ENCODE measurements at regions of chr2 and their contacts with region 1.

Region 1: DNA sequence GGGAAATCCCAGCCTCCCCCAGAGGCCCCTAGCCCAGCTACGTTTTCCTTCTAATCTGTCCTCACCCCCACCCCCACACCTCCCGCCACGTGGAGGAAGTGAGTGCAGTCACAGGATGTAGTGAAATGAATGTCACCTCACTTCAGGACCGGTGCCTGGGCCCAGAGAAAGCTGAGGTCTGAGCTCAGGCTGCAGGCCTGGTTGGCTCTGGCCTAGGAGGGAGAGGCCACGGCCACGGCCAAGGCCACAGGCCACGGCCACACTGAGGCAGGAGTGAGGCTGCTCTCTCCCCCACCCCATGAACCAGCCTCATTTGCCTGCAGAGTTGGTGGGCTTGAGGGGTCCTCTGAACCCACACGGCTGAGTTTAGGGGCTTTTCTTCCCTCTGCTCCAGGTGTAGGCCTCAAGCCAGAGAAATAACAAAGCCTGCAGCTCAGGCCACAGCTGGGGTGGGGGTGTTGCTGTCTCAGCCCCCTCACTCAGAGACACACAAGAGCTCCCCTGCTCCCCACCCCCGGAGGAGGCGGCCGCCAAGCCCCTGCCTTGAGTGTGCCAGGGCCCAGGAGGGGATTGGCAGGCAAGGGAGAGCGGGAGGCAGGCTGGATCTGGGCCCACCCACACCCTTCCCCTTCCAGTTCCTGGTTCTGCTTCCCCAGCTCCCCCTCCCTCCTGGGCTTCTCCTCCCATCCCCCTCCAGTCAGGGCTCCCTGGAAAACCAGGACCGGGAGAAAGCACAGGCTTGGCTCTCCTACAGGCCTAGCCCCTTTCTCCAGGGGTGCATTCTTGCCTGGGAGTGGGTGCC is 27.0 kb downstream of the DNMT3A start:
- DNase-seq: peak in 8 of 9 donors; percentile 51 to 90 (median 64)
- ATAC-seq: peak; percentile 79
- H3K4me3 ChIP-seq: peak overlapping the region; percentile 51
- H3K4me3 Mint-ChIP-seq: peak overlapping the region; percentile 61 to 83 (median 81)
- H3K27ac ChIP-seq: peak overlapping the region; percentile 79
- H3K27ac Mint-ChIP-seq: peak overlapping the region; percentile 79 to 97 (median 92)
- H3K4me1 ChIP-seq: peaks cover 34 to 60% of the 10 kb centered on the region in 2 donors
- H3K4me1 Mint-ChIP-seq: peaks cover 36 to 84% (median 70%) of the 10 kb centered on the region in 7 donors
- H3K27me3 ChIP-seq: no peaks in the 10 kb centered on the region
- H3K27me3 Mint-ChIP-seq: no peaks in the 10 kb centered on the region

Region 2: DNA sequence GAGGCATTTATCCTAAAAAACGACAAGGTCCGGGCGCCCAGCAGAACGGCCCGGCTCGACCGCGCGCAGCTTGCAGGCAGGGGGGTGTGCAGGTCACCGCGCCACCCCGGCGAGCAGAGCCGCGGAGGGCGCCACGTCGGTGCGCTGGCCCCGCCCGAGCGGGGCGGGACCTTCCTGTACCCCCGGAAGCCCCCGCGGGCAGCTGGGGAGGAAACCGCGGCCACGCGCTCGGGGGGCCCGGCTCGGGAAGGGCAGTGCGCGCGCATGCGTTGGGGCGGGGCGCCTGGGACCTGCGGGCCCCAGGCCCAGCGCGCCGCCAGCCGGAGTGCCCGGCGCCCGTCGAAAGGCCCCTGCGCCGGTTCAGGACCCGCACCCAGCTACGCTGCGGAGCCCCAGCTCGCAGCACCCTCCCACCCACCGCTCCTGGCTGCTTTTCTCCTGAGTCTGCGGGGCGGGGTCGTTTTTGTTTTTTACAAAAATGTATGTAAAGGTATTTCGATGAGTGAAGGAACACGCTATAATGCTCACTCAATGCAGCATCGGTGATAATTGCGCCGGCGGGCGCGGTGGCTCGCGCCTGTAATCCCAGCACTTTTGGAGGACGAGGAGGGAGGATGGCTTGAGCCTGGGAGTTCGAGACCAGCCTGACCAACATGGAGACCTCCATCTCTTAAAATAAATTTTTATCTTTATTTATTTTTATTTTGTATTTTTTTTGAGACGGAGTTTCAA is 98.6 kb before region 1 on chr2:
- CTCF ChIA-PET with region 1: no interaction called
- POLR2A ChIA-PET with region 1: no interaction called
- intact Hi-C with region 1: loop called in 1 of 2 experiments (anchors 1 kb)
- DNase-seq: peak; percentile 73 to 88 (median 85)
- ATAC-seq: peak; percentile 96
- H3K4me3 ChIP-seq: peak overlapping the region; percentile 61
- H3K4me3 Mint-ChIP-seq: peak overlapping the region; percentile 71 to 88 (median 78)
- H3K27ac ChIP-seq: peak overlapping the region; percentile 74
- H3K27ac Mint-ChIP-seq: peak overlapping the region; percentile 64 to 94 (median 89)
- H3K4me1 ChIP-seq: peaks cover 0 to 6% of the 10 kb centered on the region in 2 donors
- H3K4me1 Mint-ChIP-seq: peaks cover 9 to 33% (median 18%) of the 10 kb centered on the region in 7 donors
- H3K27me3 ChIP-seq: no peaks in the 10 kb centered on the region
- H3K27me3 Mint-ChIP-seq: no peaks in the 10 kb centered on the region

Region 3: GRCh38 chr2:25294573-25295462 is 19.9 kb before region 1 on chr2:
- CTCF ChIA-PET with region 1: interaction called, 22 read pairs
- POLR2A ChIA-PET with region 1: interaction called, 24 read pairs
- intact Hi-C with region 1: loop called in 1 of 2 experiments (anchors 2 kb)
- DNase-seq: peak; percentile 51 to 79 (median 73)
- ATAC-seq: peak; percentile 89
- H3K4me3 ChIP-seq: peak overlapping the region; percentile 46
- H3K4me3 Mint-ChIP-seq: peak overlapping the region; percentile 72 to 85 (median 82)
- H3K27ac ChIP-seq: peak overlapping the region; percentile 81
- H3K27ac Mint-ChIP-seq: peak overlapping the region; percentile 90 to 99 (median 97)
- H3K4me1 ChIP-seq: peaks cover 31 to 61% of the 10 kb centered on the region in 2 donors
- H3K4me1 Mint-ChIP-seq: peaks cover 39 to 75% (median 55%) of the 10 kb centered on the region in 7 donors
- H3K27me3 ChIP-seq: no peaks in the 10 kb centered on the region
- H3K27me3 Mint-ChIP-seq: no peaks in the 10 kb centered on the region

Region 4: DNA sequence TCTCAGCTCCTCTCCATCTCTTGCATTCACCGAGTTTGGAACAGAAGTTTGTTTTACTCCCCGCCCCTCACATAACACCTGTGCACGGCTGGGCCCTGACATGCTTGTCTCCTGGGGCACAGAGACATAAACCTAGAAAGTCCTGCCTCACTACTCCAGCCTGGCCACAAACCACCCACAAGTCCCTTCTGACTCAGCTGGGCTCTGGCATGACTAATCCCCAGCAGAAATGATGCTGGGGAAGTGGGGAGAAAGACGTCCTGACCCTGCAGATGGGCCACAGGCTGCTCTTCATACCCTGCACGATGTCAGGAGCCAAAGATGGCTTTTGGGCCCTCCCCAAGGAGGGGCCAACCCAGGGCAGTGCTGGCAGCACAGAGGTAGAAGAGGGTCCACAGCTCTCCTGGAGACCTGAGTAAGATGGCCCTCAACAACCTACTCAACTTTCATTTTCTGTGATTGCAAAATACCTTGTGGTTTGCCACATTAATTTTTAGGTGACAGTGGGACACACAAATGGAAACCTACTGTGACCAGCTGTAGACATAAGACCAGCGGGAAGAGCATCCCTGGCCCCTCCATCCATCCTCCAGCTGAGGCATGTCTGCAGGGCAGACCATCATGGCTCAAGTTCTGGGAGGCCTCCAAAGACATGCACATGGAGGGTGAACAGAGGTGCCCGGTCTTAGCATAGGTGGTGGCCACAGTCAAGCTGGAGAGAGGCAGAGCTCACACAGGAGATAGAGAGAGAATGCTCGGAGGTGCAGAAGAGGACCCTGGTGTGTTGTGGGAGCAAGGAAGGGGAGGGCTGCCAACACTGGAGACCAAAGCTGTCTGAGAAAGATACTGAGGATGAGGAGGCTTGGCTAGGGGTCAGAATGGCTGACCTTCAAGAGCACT is 13.0 kb before region 1 on chr2:
- CTCF ChIA-PET with region 1: interaction called, 8 read pairs
- POLR2A ChIA-PET with region 1: interaction called, 3 read pairs
- intact Hi-C with region 1: loop called in 1 of 2 experiments (anchors 1 kb)
- DNase-seq: peak in 2 of 9 donors; percentile 8 to 77
- ATAC-seq: peak; percentile 84
- H3K4me3 ChIP-seq: peak overlapping the region; percentile 3
- H3K4me3 Mint-ChIP-seq: peak overlapping the region in 3 of 10 donors; percentile 7 to 57 (median 44)
- H3K27ac ChIP-seq: peak overlapping the region; percentile 46
- H3K27ac Mint-ChIP-seq: peak overlapping the region; percentile 51 to 88 (median 74)
- H3K4me1 ChIP-seq: peaks cover 20 to 23% of the 10 kb centered on the region in 2 donors
- H3K4me1 Mint-ChIP-seq: peaks cover 29 to 61% (median 52%) of the 10 kb centered on the region in 7 donors
- H3K27me3 ChIP-seq: no peaks in the 10 kb centered on the region
- H3K27me3 Mint-ChIP-seq: no peaks in the 10 kb centered on the region

Region 5: DNA sequence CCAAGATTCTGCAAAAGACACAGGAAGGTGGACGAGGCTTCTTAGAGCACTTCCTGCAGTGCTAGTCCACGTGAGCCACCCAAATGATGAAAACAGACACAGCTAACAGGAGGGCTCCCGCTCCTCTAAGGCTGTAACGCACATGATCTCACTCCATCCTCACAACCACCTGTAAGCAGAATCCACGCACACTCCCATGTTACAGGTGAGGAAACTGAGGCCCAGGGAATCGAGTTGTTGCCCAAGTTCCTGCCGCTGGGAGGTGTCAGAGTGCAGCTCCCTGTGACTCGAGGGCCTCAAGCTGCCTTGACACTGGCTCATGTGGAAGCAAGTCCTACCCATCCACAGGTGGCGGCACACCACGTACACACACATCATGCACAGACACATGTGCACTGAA is 22.6 kb after region 1 on chr2:
- CTCF ChIA-PET with region 1: interaction called, 18 read pairs
- POLR2A ChIA-PET with region 1: interaction called, 6 read pairs
- intact Hi-C with region 1: loop called (anchors 1 kb)
- DNase-seq: peak in 2 of 9 donors; percentile 35 to 46
- ATAC-seq: no peak
- H3K4me3 ChIP-seq: no peak overlapping the region
- H3K4me3 Mint-ChIP-seq: peak overlapping the region; percentile 21 to 84 (median 66)
- H3K27ac ChIP-seq: peak overlapping the region; percentile 69
- H3K27ac Mint-ChIP-seq: peak overlapping the region; percentile 62 to 96 (median 76)
- H3K4me1 ChIP-seq: peaks cover 13 to 67% of the 10 kb centered on the region in 2 donors
- H3K4me1 Mint-ChIP-seq: peaks cover 54 to 76% (median 70%) of the 10 kb centered on the region in 7 donors
- H3K27me3 ChIP-seq: no peaks in the 10 kb centered on the region
- H3K27me3 Mint-ChIP-seq: no peaks in the 10 kb centered on the region

Region 6: GRCh38 chr2:25362049-25362433 is 47.3 kb after region 1 on chr2:
- CTCF ChIA-PET with region 1: interaction called, 7 read pairs
- POLR2A ChIA-PET with region 1: interaction called, 16 read pairs
- intact Hi-C with region 1: loop called (anchors 2 kb)
- DNase-seq: peak; percentile 86 to 99 (median 93)
- ATAC-seq: peak; percentile 98
- H3K4me3 ChIP-seq: peak overlapping the region; percentile 78
- H3K4me3 Mint-ChIP-seq: peak overlapping the region; percentile 83 to 95 (median 89)
- H3K27ac ChIP-seq: peak overlapping the region; percentile 81
- H3K27ac Mint-ChIP-seq: peak overlapping the region; percentile 84 to 96 (median 92)
- H3K4me1 ChIP-seq: peaks cover 3 to 4% of the 10 kb centered on the region in 2 donors
- H3K4me1 Mint-ChIP-seq: peaks cover 11 to 32% (median 25%) of the 10 kb centered on the region in 7 donors
- H3K27me3 ChIP-seq: no peaks in the 10 kb centered on the region
- H3K27me3 Mint-ChIP-seq: no peaks in the 10 kb centered on the region

Region 7: DNA sequence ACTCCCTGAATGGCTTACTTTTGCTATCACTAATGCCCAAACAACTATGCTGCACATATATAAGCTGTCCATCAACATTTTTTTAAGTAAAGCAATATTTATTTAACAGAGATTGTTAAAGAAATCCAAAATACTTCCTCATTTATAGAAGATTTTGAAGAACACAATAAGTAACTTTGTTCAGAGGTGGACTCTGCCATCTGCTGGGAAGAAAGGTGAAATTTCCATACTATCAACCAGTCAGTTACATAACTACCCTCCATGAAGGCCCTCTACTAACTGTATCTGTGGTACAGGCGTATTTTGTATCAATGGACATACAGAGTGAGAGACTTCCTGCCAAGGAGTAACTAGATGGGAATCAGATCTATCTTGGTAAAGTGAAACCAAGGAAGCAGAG is 252.7 kb after region 1 on chr2:
- CTCF ChIA-PET with region 1: no interaction called
- POLR2A ChIA-PET with region 1: no interaction called
- intact Hi-C with region 1: loop called in 1 of 2 experiments (anchors 1 kb)
- DNase-seq: peak in 4 of 9 donors; percentile 6 to 27 (median 16)
- ATAC-seq: peak; percentile 67
- H3K4me3 ChIP-seq: no peak overlapping the region
- H3K4me3 Mint-ChIP-seq: no peak overlapping the region
- H3K27ac ChIP-seq: no peak overlapping the region
- H3K27ac Mint-ChIP-seq: peak overlapping the region in 1 of 9 donors; percentile 47
- H3K4me1 ChIP-seq: no peaks in the 10 kb centered on the region
- H3K4me1 Mint-ChIP-seq: peaks cover 0 to 14% (median 4%) of the 10 kb centered on the region in 7 donors
- H3K27me3 ChIP-seq: no peaks in the 10 kb centered on the region
- H3K27me3 Mint-ChIP-seq: no peaks in the 10 kb centered on the region